ENCODE measurements at regions of chr11 and their contacts with region 1.

Region 1: GRCh38 chr11:64185816-64186498 is at the start of gene STIP1:
- DNase-seq: peak; percentile 99
- H3K4me3 Mint-ChIP-seq: peak within 1 kb of the TSS; percentile 95
- H3K27ac Mint-ChIP-seq: peak within 1 kb of the TSS; percentile 99
- H3K4me1 Mint-ChIP-seq: peaks cover 39% of the 10 kb centered on the region
- H3K27me3 Mint-ChIP-seq: peaks cover 2% of the 10 kb centered on the region
- total RNA-seq, gene STIP1: 493 and 495 TPM in 2 replicates

Region 2: GRCh38 chr11:63974259-63975143 is 211.5 kb before region 1 on chr11 and contains the start of gene COX8A:
- intact Hi-C with region 1: loop called (anchors 1 kb)
- DNase-seq: peak; percentile 96
- H3K4me3 Mint-ChIP-seq: peak within 1 kb of the TSS; percentile 100
- H3K27ac Mint-ChIP-seq: peak within 1 kb of the TSS; percentile 97
- H3K4me1 Mint-ChIP-seq: peaks cover 17% of the 10 kb centered on the region
- H3K27me3 Mint-ChIP-seq: peaks cover 8% of the 10 kb centered on the region
- total RNA-seq, gene COX8A: 289 and 291 TPM in 2 replicates

Region 3: GRCh38 chr11:64165849-64166635 is 19.9 kb before region 1 on chr11 and contains the start of gene MACROD1:
- intact Hi-C with region 1: loop called (anchors 2 kb)
- DNase-seq: peak; percentile 78
- H3K4me3 Mint-ChIP-seq: peak within 1 kb of the TSS; percentile 93
- H3K27ac Mint-ChIP-seq: peak within 1 kb of the TSS; percentile 86
- H3K4me1 Mint-ChIP-seq: peaks cover 8% of the 10 kb centered on the region
- H3K27me3 Mint-ChIP-seq: peaks cover 2% of the 10 kb centered on the region
- total RNA-seq, gene MACROD1: 17.4 and 20.2 TPM in 2 replicates

Region 4: GRCh38 chr11:64204464-64204989 is 18.6 kb after region 1 on chr11:
- intact Hi-C with region 1: loop called (anchors 1 kb)
- DNase-seq: peak; percentile 61
- H3K4me3 Mint-ChIP-seq: peak overlapping the region; percentile 78
- H3K27ac Mint-ChIP-seq: peak overlapping the region; percentile 70
- H3K4me1 Mint-ChIP-seq: peaks cover 39% of the 10 kb centered on the region
- H3K27me3 Mint-ChIP-seq: no peaks in the 10 kb centered on the region

Region 5: GRCh38 chr11:64240394-64241174 is 54.6 kb after region 1 on chr11 and contains the start of gene FKBP2:
- intact Hi-C with region 1: loop called (anchors 1 kb)
- DNase-seq: peak; percentile 99
- H3K4me3 Mint-ChIP-seq: peak within 1 kb of the TSS; percentile 94
- H3K27ac Mint-ChIP-seq: peak within 1 kb of the TSS; percentile 94
- H3K4me1 Mint-ChIP-seq: peaks cover 36% of the 10 kb centered on the region
- H3K27me3 Mint-ChIP-seq: no peaks in the 10 kb centered on the region
- total RNA-seq, gene FKBP2: 32.6 and 34.3 TPM in 2 replicates

Region 6: GRCh38 chr11:64284048-64284961 is 98.3 kb after region 1 on chr11 and contains the start of gene BAD:
- intact Hi-C with region 1: loop called (anchors 1 kb)
- DNase-seq: peak; percentile 91
- H3K4me3 Mint-ChIP-seq: peak within 1 kb of the TSS; percentile 87
- H3K27ac Mint-ChIP-seq: peak within 1 kb of the TSS; percentile 95
- H3K4me1 Mint-ChIP-seq: peaks cover 30% of the 10 kb centered on the region
- H3K27me3 Mint-ChIP-seq: peaks cover 1% of the 10 kb centered on the region
- total RNA-seq, gene BAD: 30.1 and 38.0 TPM in 2 replicates

Measured in activated T-helper 1 cell treated with anti-CD3 and anti-CD28 coated beads, Interleukin-12 subunit alpha, Interleukin-12 subunit beta, Interleukin-2, Interleukin-4 antibody, amounts not matched to agents 30 ng/mL and 10 ng/mL and 1 ng/mL, durations not matched to agents 14 hours and 24 hours and 36 hours (primary cell).